ENCODE measurements at regions of chr2 and their contacts with region 1.

Region 1: DNA sequence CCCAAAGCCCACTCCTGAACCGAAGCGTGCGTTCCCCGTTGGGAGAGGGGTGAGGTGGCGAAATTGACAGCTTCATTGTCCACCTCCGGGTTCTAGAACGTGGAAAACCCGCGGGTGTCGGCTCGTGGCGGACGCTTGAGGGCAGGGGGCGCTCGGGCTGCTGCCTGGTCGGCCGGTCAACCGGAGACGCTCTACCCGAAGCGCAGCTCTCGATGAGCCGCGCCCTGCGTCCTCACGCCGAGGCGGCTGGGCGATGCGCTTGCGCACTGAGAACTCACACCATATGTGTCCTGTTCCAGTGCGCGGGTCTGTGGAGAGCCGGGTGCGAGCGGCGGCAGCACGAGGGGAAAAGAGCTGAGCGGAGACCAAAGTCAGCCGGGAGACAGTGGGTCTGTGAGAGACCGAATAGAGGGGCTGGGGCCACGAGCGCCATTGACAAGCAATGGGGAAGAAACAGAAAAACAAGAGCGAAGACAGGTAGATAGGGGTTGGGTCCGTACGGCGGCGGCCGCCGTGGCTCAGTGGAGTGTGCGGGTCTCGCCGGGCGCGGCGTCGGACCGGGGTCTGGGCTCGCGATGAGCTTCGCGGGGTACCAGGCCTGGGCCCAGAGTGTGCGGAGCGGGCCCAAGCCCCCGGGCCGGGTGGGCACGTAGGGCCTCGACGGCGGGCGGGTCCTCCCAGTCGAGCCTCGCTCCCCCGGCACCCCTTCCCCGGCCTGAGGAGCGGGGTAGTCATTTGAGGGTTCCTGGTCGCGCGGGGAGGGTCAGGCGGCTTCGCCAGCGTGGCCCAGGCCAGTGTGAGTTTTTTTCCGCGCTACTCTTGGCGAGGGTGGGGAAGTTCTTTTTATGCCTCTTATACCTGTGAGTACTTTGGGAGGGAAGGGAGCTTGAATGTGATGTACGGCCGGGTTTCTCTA is at the start of gene EIF5B:
- DNase-seq: peak; percentile 82 to 97 (median 93)
- ATAC-seq: peak; percentile 58
- H3K4me3 ChIP-seq: peak within 1 kb of the TSS; percentile 89
- H3K4me3 Mint-ChIP-seq: no peak within 1 kb of the TSS
- H3K27ac ChIP-seq: peak within 1 kb of the TSS; percentile 72 to 79
- H3K27ac Mint-ChIP-seq: no peak within 1 kb of the TSS
- H3K4me1 ChIP-seq: peaks cover 29% of the 10 kb centered on the region
- H3K4me1 Mint-ChIP-seq: peaks cover 40% of the 10 kb centered on the region
- H3K27me3 ChIP-seq: no peaks in the 10 kb centered on the region
- H3K27me3 Mint-ChIP-seq: no peaks in the 10 kb centered on the region
- CTCF ChIP-seq: peak; percentile 74
- total RNA-seq, gene EIF5B: 27.8 to 33.2 TPM

Region 2: DNA sequence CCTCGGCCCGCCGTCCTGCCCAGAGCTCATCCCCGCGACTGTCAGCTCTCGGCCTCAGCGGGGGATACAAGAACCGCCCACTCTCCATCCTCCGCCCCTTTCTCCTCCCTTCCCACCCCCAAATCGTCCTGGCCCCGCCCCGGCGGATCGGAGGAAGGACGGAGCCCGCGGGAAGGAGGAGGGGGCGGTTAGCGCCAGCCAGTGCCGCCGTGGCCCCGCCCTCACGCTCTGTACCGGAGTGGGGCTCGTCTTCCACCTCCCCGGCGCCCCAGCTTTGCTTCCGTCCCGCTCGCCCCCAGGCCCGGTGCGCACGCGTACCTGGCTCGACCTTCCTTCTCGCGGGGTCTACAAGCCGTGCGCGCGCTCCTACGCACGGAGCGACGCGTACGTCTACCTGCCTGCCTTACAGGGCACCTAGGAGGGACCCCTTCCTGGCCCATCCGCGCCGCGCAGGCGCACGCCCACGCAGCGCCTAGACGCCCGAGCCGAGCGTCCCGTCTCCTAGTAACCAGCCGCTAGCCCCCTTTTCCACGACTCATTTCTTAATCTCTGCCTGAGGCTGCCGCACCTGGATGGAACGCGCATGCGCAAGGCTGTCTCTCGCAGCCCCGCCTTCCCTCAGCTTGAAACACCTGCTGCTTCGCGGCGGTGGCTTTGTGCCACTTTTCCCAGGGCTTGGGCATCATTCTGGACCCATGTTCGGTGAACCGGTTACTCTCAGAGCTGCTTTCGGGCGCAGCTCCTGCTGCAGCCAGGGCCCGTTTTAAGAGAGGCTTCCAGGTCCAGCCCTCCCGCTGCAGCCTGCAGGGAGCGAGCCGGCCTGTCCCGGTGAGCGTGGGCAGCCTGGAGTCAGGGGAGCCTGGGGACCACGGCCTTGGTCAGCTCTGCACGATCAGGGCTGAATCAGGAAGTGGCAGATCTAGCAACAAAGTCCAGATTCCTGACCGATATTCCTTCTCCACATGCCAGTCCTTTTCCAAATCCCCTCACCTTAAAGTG is 196.0 kb before region 1 on chr2 and contains the start of gene C2orf15:
- CTCF ChIA-PET with region 1: interaction called, 4 read pairs
- POLR2A ChIA-PET with region 1: interaction called, 20 read pairs
- intact Hi-C with region 1: loop called in 1 of 2 experiments (anchors 1 kb)
- DNase-seq: peak; percentile 92 to 99 (median 97)
- ATAC-seq: peak; percentile 85
- H3K4me3 ChIP-seq: peak within 1 kb of the TSS; percentile 74
- H3K4me3 Mint-ChIP-seq: peak within 1 kb of the TSS; percentile 97
- H3K27ac ChIP-seq: peak within 1 kb of the TSS; percentile 85 to 92
- H3K27ac Mint-ChIP-seq: peak within 1 kb of the TSS; percentile 94
- H3K4me1 ChIP-seq: peaks cover 8% of the 10 kb centered on the region
- H3K4me1 Mint-ChIP-seq: peaks cover 33% of the 10 kb centered on the region
- H3K27me3 ChIP-seq: no peaks in the 10 kb centered on the region
- H3K27me3 Mint-ChIP-seq: no peaks in the 10 kb centered on the region
- CTCF ChIP-seq: no peak
- total RNA-seq, gene C2orf15: 2.1 to 2.8 TPM

Region 3: DNA sequence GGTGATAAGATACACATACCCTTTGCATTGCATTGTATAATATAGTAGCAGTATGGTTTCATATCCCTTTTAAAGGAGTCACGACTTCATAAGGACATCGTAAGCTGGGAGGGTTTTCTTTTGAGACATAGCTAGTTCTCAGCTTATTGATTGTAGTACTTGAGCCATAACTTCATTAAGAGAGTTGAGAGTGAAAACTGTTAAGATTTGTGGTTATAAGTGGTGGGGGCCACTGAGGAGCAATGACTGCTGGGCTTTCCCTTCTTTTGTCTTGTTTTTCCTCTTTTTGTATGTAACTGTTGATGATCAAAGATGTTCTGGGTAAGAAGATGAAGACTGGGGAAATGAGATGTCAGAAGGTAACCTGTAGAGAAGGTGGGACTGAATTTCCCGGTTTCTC is 10.8 kb after region 1 on chr2:
- CTCF ChIA-PET with region 1: interaction called, 6 read pairs
- POLR2A ChIA-PET with region 1: interaction called, 16 read pairs
- intact Hi-C with region 1: no loop called
- DNase-seq: peak in 2 of 14 experiments; percentile 26 to 27
- ATAC-seq: peak; percentile 21
- H3K4me3 ChIP-seq: no peak overlapping the region
- H3K4me3 Mint-ChIP-seq: no peak overlapping the region
- H3K27ac ChIP-seq: no peak overlapping the region
- H3K27ac Mint-ChIP-seq: peak overlapping the region; percentile 55
- H3K4me1 ChIP-seq: peaks cover 6% of the 10 kb centered on the region
- H3K4me1 Mint-ChIP-seq: peaks cover 62% of the 10 kb centered on the region
- H3K27me3 ChIP-seq: no peaks in the 10 kb centered on the region
- H3K27me3 Mint-ChIP-seq: no peaks in the 10 kb centered on the region
- CTCF ChIP-seq: no peak

Measured in CD4-positive, alpha-beta T cell (primary cell).